ENCODE measurements at regions of chr2 and their contacts with region 1.

Region 1: DNA sequence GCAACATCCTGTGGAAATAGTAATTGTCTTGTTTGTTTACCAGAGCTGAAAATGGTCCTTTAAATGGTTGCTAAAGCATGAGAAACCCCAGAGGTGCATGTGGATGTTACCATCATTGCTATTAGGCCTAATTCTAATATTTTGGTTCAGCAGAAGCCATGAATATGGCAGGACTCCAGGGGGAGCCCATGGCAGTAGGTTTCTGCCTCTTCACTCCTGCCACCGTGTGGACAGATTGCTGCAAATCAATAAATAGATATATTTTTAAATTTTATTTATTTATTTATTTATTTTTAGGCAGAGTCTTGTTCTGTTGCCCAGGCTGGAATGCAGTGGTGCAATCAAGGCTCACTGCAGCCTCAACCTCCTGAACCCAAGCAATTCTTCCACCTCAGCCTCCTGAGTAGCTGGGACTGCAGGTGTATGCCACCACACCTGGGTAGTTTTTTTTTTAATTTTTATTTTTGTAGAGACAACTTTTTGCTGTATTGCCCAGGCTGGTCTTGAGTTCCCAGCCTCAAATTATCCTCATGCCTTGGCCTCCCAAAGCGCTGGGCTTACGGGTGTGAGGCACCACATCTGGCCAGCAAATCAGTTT is 54.9 kb upstream of the CAPN13 start:
- DNase-seq: no peak
- H3K4me3 ChIP-seq: no peak overlapping the region
- H3K27ac ChIP-seq: no peak overlapping the region
- H3K4me1 ChIP-seq: peaks cover 0 to 17% (median 6%) of the 10 kb centered on the region in 6 donors
- H3K27me3 ChIP-seq: peaks cover 0 to 4% (median 0%) of the 10 kb centered on the region in 7 donors
- CTCF ChIP-seq: peak in 9 of 11 experiments; percentile 30 to 76 (median 60)
- POLR2A ChIP-seq: no peak

Region 2: DNA sequence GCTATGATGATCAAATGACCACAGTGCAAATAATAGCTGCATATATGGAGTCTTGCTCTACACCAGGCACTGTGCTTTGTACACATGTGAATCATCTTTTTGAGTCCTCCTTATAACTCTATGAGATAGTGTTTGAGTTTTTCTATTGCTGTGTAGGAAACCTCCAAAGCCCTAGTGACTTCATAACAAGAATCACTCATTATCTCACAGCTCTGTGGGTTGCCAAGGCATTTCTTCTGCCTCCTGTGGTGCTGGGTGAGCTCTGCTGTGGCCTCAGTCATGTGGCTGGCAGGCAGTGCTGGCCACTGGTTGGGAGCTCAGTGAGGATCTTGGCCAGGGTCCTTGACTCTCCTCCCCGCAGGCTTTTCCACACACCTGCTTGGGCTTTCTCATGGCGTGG is 208.3 kb before region 1 on chr2:
- intact Hi-C with region 1: no loop called
- DNase-seq: no peak
- H3K4me3 ChIP-seq: no peak overlapping the region
- H3K27ac ChIP-seq: no peak overlapping the region
- H3K4me1 ChIP-seq: no peaks in the 10 kb centered on the region
- H3K27me3 ChIP-seq: no peaks in the 10 kb centered on the region
- CTCF ChIP-seq: no peak
- POLR2A ChIP-seq: no peak

Region 3: DNA sequence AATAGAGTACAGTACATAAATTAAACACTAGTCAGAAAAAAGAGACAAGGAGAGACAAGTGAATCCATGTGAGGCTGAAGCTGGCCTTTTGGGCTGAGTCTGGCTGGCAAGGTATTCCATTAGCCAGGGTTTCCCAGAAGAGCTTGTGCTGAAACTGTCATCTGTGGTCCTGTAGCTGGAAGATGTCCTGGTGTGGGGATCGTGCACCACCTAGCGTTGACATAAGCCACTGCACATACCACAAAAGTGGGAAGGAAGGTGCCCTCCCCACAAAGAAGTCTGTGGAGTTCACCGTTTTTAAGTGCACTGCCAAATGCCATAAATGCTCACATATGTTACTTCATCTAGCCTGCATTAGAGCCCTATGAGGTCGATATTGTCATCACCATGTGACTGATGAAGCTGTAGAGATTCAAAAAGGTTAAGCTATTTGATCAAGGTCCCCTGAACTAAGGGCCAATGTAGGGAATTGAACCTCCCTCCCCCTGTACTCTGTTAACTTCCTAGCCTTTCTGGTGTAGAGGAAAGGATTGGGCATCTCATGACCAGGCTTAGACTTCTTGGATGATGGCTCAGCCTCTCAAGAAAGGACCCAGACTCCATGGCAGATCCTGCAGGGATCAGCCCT is 308.0 kb after region 1 on chr2:
- intact Hi-C with region 1: loop called (anchors 10 kb)
- DNase-seq: peak; percentile 80
- H3K4me3 ChIP-seq: no peak overlapping the region
- H3K27ac ChIP-seq: no peak overlapping the region
- H3K4me1 ChIP-seq: peaks cover 0 to 4% (median 0%) of the 10 kb centered on the region in 6 donors
- H3K27me3 ChIP-seq: no peaks in the 10 kb centered on the region
- CTCF ChIP-seq: peak; percentile 80 to 92 (median 89)
- POLR2A ChIP-seq: no peak

Region 4: DNA sequence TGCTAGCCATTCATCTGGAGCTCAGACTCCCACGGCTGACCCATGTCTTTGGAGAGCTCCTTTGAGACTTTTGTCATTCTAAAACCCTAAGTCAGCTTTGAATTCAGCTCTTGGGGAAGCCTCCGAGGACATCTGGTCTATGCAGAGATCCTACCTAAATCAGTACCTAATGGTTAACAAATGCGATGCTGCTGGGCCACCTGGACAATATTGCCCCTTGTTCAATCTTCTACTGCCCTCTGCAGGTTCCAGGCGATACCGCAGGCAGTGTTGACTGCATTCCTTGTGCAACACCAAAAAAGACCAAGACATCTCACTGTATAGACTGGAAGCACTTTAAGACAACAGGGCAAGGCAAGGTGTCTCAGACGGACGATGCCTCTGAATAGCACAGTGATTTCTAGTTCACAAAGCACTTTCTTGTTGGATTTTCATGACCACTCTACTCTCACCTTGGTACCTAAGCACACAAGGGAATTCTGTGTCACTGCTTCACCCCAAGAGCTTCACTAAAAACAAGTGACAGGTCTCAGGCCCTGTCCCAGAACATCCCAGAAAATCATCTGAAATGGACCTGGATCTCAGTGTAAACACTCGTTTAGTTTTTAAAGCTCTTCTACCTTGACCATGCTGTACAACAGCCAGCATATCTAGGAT is 471.5 kb after region 1 on chr2:
- intact Hi-C with region 1: loop called (anchors 5 kb)
- DNase-seq: peak; percentile 90
- H3K4me3 ChIP-seq: no peak overlapping the region
- H3K27ac ChIP-seq: no peak overlapping the region
- H3K4me1 ChIP-seq: peaks cover 0 to 5% (median 2%) of the 10 kb centered on the region in 6 donors
- H3K27me3 ChIP-seq: peaks cover 0 to 8% (median 0%) of the 10 kb centered on the region in 7 donors
- CTCF ChIP-seq: peak; percentile 89 to 97 (median 95)
- POLR2A ChIP-seq: no peak